Caco-2 (cell line): ENCODE measurements at regions of chr2 and their contacts with region 1.

Region 1: GRCh38 chr2:72770879-72771461 is 54.9 kb downstream of the EXOC6B start:
- DNase-seq: peak; percentile 71 to 83
- H3K4me3 ChIP-seq: no peak overlapping the region
- H3K4me3 Mint-ChIP-seq: no peak overlapping the region
- H3K27ac Mint-ChIP-seq: no peak overlapping the region
- H3K4me1 ChIP-seq: peaks cover 15% of the 10 kb centered on the region
- H3K4me1 Mint-ChIP-seq: peaks cover 20% of the 10 kb centered on the region
- H3K27me3 ChIP-seq: no peaks in the 10 kb centered on the region
- H3K27me3 Mint-ChIP-seq: no peaks in the 10 kb centered on the region
- CTCF ChIP-seq: peak; percentile 83 to 88

Region 2: GRCh38 chr2:72427022-72427861 is 343.7 kb before region 1 on chr2:
- CTCF ChIA-PET with region 1: interaction called, 13 read pairs
- POLR2A ChIA-PET with region 1: no interaction called
- intact Hi-C with region 1: no loop called
- DNase-seq: no peak
- H3K4me3 ChIP-seq: no peak overlapping the region
- H3K4me3 Mint-ChIP-seq: no peak overlapping the region
- H3K27ac Mint-ChIP-seq: no peak overlapping the region
- H3K4me1 ChIP-seq: no peaks in the 10 kb centered on the region
- H3K4me1 Mint-ChIP-seq: no peaks in the 10 kb centered on the region
- H3K27me3 ChIP-seq: no peaks in the 10 kb centered on the region
- H3K27me3 Mint-ChIP-seq: no peaks in the 10 kb centered on the region
- CTCF ChIP-seq: no peak

Region 3: GRCh38 chr2:72638600-72639194 is 132.3 kb before region 1 on chr2:
- CTCF ChIA-PET with region 1: no interaction called
- POLR2A ChIA-PET with region 1: no interaction called
- intact Hi-C with region 1: no loop called
- DNase-seq: no peak
- H3K4me3 ChIP-seq: no peak overlapping the region
- H3K4me3 Mint-ChIP-seq: no peak overlapping the region
- H3K27ac Mint-ChIP-seq: no peak overlapping the region
- H3K4me1 ChIP-seq: no peaks in the 10 kb centered on the region
- H3K4me1 Mint-ChIP-seq: peaks cover 18% of the 10 kb centered on the region
- H3K27me3 ChIP-seq: no peaks in the 10 kb centered on the region
- H3K27me3 Mint-ChIP-seq: no peaks in the 10 kb centered on the region
- CTCF ChIP-seq: no peak

Region 4: GRCh38 chr2:72806280-72806945 is 35.4 kb after region 1 on chr2:
- CTCF ChIA-PET with region 1: interaction called, 11 read pairs
- POLR2A ChIA-PET with region 1: no interaction called
- intact Hi-C with region 1: no loop called
- DNase-seq: no peak
- H3K4me3 ChIP-seq: no peak overlapping the region
- H3K4me3 Mint-ChIP-seq: no peak overlapping the region
- H3K27ac Mint-ChIP-seq: no peak overlapping the region
- H3K4me1 ChIP-seq: no peaks in the 10 kb centered on the region
- H3K4me1 Mint-ChIP-seq: peaks cover under 1% of the 10 kb centered on the region
- H3K27me3 ChIP-seq: no peaks in the 10 kb centered on the region
- H3K27me3 Mint-ChIP-seq: no peaks in the 10 kb centered on the region
- CTCF ChIP-seq: no peak

Region 5: DNA sequence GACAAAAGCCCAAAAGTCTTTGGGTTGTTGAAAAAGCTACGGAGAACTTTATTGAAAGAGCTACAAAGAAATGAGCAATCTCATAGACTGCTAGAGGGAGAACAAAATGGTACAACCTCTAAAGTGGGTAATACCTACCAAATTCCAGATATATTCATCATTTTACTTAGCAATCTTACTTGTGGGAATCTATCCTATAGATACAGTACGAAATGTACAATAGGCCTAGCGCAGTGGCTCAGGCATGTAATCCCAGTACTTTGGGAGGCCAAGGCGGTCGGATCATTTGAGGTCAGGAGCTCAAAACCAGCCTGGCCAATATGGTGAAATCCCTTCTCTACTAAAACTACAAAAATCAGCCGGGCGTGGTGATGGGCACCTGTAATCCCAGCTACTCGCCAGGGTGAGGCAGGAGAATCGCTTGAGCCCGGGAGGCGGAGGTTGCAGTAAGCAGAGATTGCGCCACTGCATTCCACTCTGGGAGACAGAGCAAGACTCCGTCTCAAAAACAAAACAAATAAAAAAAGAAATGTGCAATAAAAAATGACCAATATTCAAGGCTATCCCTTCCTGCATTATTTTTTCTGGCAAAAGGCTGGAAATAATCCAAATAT is 44.8 kb after region 1 on chr2:
- CTCF ChIA-PET with region 1: no interaction called
- POLR2A ChIA-PET with region 1: no interaction called
- intact Hi-C with region 1: loop called (anchors 5 kb)
- DNase-seq: peak; percentile 69 to 76
- H3K4me3 ChIP-seq: no peak overlapping the region
- H3K4me3 Mint-ChIP-seq: no peak overlapping the region
- H3K27ac Mint-ChIP-seq: no peak overlapping the region
- H3K4me1 ChIP-seq: 0 out of 2 replicates have a peak, but pooled peaks cover 4% of the 10 kb centered on the region
- H3K4me1 Mint-ChIP-seq: peaks cover 23% of the 10 kb centered on the region
- H3K27me3 ChIP-seq: no peaks in the 10 kb centered on the region
- H3K27me3 Mint-ChIP-seq: no peaks in the 10 kb centered on the region
- CTCF ChIP-seq: peak; percentile 3 to 48

Region 6: DNA sequence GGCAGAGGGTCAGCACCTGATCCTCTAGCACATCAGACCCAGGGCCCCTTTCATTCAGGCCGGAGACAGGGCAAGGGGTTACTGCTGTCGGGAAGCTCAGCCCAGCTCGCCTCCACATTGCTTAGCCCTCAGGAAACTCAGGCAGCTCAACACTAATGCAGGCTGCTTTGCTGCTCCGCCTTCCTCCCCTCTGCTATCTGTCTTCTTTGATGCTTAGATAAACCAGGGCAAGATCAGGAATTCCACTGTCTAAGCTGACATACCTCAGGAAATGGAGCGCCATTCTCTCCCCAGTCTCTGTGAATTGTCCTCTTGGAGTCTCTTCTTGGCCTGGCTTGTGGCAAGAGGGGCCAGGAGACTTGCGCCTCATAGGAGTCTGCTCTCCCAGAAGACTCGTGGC is 80.4 kb after region 1 on chr2:
- CTCF ChIA-PET with region 1: interaction called, 4 read pairs
- POLR2A ChIA-PET with region 1: no interaction called
- intact Hi-C with region 1: loop called (anchors 2 kb)
- DNase-seq: peak; percentile 63 to 73
- H3K4me3 ChIP-seq: no peak overlapping the region
- H3K4me3 Mint-ChIP-seq: no peak overlapping the region
- H3K27ac Mint-ChIP-seq: peak overlapping the region; percentile 7
- H3K4me1 ChIP-seq: peaks cover 31% of the 10 kb centered on the region
- H3K4me1 Mint-ChIP-seq: peaks cover 13% of the 10 kb centered on the region
- H3K27me3 ChIP-seq: no peaks in the 10 kb centered on the region
- H3K27me3 Mint-ChIP-seq: no peaks in the 10 kb centered on the region
- CTCF ChIP-seq: no peak

Region 7: DNA sequence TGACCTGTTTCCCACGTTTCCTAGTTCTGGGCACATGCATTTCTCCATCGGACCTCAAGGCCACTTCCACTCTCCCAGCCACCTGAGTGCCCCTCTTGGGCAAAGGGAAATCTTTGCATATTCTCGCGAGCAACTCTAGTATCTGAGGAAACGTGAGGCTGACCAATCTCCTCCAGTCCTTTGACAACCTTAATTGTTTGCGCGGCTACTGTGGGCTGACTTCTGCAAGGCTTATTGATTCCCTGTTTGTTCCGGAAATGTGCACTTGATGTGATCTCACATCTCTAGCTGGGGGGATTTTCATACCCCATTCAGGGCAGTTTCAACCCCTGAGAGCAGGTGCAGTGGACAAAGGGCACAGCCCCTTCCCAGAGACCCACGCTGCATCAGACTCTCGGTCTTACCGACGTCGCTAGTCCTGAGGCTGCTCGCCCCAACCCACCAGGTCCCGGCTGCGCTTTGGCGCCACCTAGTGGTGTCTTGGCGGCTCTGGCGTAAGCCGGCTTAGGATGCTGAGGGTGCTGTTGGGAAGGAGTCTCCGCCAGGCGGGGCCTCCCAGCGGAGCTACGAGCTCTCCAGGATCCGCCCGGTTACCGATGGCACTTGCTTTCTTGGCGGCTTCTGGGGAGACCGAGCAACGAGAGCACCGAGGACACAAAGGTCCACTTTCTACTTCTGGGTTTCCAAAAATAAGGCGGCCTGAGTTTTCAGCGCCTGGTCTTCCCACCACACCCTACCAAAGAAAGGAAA is 91.4 kb after region 1 on chr2:
- CTCF ChIA-PET with region 1: interaction called, 9 read pairs
- POLR2A ChIA-PET with region 1: no interaction called
- intact Hi-C with region 1: loop called (anchors 1 kb)
- DNase-seq: peak; percentile 93 to 97
- H3K4me3 ChIP-seq: peak overlapping the region; percentile 36
- H3K4me3 Mint-ChIP-seq: peak overlapping the region; percentile 73
- H3K27ac Mint-ChIP-seq: no peak overlapping the region
- H3K4me1 ChIP-seq: peaks cover 8% of the 10 kb centered on the region
- H3K4me1 Mint-ChIP-seq: peaks cover 6% of the 10 kb centered on the region
- H3K27me3 ChIP-seq: no peaks in the 10 kb centered on the region
- H3K27me3 Mint-ChIP-seq: no peaks in the 10 kb centered on the region
- CTCF ChIP-seq: peak; percentile 95 to 99